Heart left ventricle (tissue), 16 donors: ENCODE measurements at regions of chr16 and their contacts with region 1.

Region 1: DNA sequence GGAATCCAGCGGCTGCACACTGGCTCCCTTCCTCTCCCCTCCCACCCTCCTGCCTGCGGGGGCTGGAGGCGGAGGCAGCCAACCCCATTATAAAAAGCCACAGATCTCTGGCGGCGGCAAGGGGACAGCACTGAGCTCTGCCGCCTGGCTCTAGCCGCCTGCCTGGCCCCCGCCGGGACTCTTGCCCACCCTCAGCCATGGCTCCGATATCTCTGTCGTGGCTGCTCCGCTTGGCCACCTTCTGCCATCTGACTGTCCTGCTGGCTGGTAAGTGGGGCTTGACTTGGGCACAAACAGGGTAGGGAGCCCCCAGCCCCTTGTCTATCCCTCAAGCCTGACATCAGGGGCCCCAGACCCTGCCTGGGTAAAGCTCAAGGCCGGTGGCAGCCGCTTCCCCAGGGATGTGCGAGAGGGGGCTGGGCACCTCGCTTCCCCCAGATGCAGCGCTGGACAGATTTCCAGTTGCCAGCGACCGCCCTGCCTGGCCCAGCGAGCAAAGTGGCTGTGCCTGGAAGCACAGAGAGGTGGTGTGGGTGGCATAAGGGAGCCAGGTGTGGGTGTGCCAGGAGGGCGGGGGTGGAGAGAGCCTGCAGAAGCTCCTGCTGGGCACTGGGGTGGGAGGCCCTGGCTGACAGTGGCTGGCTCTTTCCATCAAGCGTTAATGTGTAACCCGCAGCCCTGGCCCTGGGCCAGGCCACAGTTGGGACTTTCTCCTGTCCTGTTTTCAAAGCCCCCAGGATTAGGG is at the start of gene CX3CL1:
- DNase-seq: peak in 4 of 5 donors; percentile 76 to 84 (median 82)
- ATAC-seq: peak; percentile 76 to 87 (median 84)
- H3K4me3 ChIP-seq: peak within 1 kb of the TSS; percentile 30 to 88 (median 68)
- H3K27ac ChIP-seq: peak within 1 kb of the TSS; percentile 84 to 97 (median 90)
- H3K4me1 ChIP-seq: peaks cover 0 to 48% (median 15%) of the 10 kb centered on the region in 12 donors
- H3K27me3 ChIP-seq: no peaks in the 10 kb centered on the region
- CTCF ChIP-seq: peak in 9 of 12 donors; percentile 22 to 55 (median 31)
- POLR2A ChIP-seq: peak in 1 of 2 donors; percentile 91
- total RNA-seq, gene CX3CL1: 8.3 to 59.5 (median 15.4) TPM

Region 2: GRCh38 chr16:57316390-57317017 is 56.0 kb before region 1 on chr16:
- intact Hi-C with region 1: loop called in 4 of 10 experiments (anchors 5 to 10 kb)
- DNase-seq: peak in 4 of 5 donors; percentile 51 to 77 (median 72)
- ATAC-seq: peak; percentile 62 to 93 (median 90)
- H3K4me3 ChIP-seq: no peak overlapping the region
- H3K27ac ChIP-seq: peak overlapping the region; percentile 25 to 87 (median 76)
- H3K4me1 ChIP-seq: peaks cover 0 to 44% (median 33%) of the 10 kb centered on the region in 12 donors
- H3K27me3 ChIP-seq: no peaks in the 10 kb centered on the region
- CTCF ChIP-seq: no peak
- POLR2A ChIP-seq: no peak

Region 3: GRCh38 chr16:57335366-57335765 is 37.2 kb before region 1 on chr16:
- intact Hi-C with region 1: loop called in 2 of 10 experiments (anchors 5 kb)
- DNase-seq: no peak
- ATAC-seq: peak in 2 of 4 donors; percentile 53 to 92
- H3K4me3 ChIP-seq: no peak overlapping the region
- H3K27ac ChIP-seq: peak overlapping the region in 6 of 12 donors; percentile 11 to 66 (median 40)
- H3K4me1 ChIP-seq: peaks cover 0 to 17% (median 0%) of the 10 kb centered on the region in 12 donors
- H3K27me3 ChIP-seq: no peaks in the 10 kb centered on the region
- CTCF ChIP-seq: no peak
- POLR2A ChIP-seq: no peak

Region 4: DNA sequence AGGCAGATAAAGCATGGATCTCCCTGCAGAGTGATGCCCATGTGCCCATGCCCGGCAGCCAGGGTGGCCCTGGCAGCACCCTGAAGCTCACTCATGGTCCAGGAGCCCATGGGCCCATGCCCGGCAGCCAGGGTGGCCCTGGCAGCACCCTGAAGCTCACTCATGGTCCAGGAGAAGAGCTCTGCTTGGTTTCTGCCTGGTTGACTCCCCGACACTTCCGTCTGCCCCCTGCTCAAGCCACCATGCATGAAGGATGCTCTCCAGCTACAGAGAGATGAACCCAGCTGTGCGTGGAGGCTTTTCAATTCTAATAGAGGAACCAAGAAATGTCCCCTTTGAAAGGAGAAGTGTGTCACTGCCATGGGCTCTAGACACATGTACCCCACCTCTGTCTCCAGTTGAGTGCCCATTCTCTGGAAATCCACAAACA is 40.8 kb after region 1 on chr16:
- intact Hi-C with region 1: loop called in 6 of 10 experiments (anchors 2 to 5 kb)
- DNase-seq: no peak
- ATAC-seq: no peak
- H3K4me3 ChIP-seq: no peak overlapping the region
- H3K27ac ChIP-seq: no peak overlapping the region
- H3K4me1 ChIP-seq: peaks cover 3 to 43% (median 29%) of the 10 kb centered on the region in 12 donors
- H3K27me3 ChIP-seq: no peaks in the 10 kb centered on the region
- CTCF ChIP-seq: no peak
- POLR2A ChIP-seq: no peak

Region 5: GRCh38 chr16:57427824-57428223 is 55.3 kb after region 1 on chr16:
- intact Hi-C with region 1: no loop called
- DNase-seq: no peak
- ATAC-seq: no peak
- H3K4me3 ChIP-seq: no peak overlapping the region
- H3K27ac ChIP-seq: no peak overlapping the region
- H3K4me1 ChIP-seq: peaks cover 0 to 18% (median 10%) of the 10 kb centered on the region in 12 donors
- H3K27me3 ChIP-seq: no peaks in the 10 kb centered on the region
- CTCF ChIP-seq: no peak
- POLR2A ChIP-seq: no peak